ENCODE measurements at regions of chr11 and their contacts with region 1.

Region 1: DNA sequence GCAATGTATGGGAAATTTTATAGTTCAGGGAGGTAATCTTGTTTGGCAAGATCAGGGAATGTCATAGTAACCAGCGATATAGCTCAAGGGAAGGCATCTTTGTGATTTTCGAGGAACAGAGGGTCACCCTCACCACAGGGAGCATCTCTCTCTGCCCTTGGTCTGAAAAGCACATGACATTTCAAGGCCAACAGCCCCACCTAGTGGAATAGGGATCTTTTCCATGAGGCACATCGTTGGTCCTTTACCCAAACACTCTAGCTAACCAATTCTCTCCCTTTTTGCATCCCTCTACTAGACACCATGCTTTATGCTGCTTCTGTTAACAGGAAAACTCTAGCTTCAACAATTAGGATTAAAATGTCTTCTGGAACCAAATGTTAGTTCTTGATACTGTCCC is 179.0 kb downstream of the GRM5 start:
- DNase-seq: peak; percentile 46
- ATAC-seq: peak; percentile 62; the same call in 1 of the 2 replicates
- H3K4me3 ChIP-seq: no peak overlapping the region
- H3K27ac ChIP-seq: no peak overlapping the region
- H3K4me1 ChIP-seq: no peaks in the 10 kb centered on the region
- H3K27me3 ChIP-seq: no peaks in the 10 kb centered on the region
- CTCF ChIP-seq: peak; percentile 57
- POLR2A ChIP-seq: no peak
- RAD21 ChIP-seq: peak; percentile 68

Region 2: DNA sequence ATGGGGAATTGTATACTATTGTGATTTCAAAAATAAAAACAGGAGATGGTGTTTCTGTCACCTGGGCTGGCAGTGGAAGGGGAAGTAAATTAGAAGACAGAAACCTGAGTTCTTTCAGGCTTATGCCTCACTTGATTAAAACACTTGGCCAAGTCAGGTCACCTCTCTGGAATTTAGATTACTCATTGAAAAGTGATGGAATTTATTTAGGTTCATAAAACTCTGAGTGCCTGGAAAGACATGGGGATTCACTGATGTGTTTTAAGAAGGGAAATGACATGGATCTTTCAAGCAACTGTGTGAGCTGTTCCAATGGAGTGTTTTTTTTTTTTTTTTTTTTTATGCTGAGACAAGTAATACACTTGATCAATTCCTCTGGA is 1449.0 kb before region 1 on chr11:
- CTCF ChIA-PET with region 1: no interaction called
- POLR2A ChIA-PET with region 1: no interaction called
- dilution Hi-C with region 1: no loop called
- in situ Hi-C with region 1: no loop called
- intact Hi-C with region 1: no loop called
- DNase-seq: peak; percentile 84
- ATAC-seq: peak; percentile 54
- H3K4me3 ChIP-seq: no peak overlapping the region
- H3K27ac ChIP-seq: no peak overlapping the region
- H3K4me1 ChIP-seq: peaks cover 14% of the 10 kb centered on the region; the same call in 1 of the 2 replicates
- H3K27me3 ChIP-seq: no peaks in the 10 kb centered on the region
- CTCF ChIP-seq: no peak
- POLR2A ChIP-seq: no peak
- RAD21 ChIP-seq: no peak

Region 3: GRCh38 chr11:87743007-87743406 is 1143.8 kb before region 1 on chr11:
- CTCF ChIA-PET with region 1: no interaction called
- POLR2A ChIA-PET with region 1: no interaction called
- dilution Hi-C with region 1: no loop called
- in situ Hi-C with region 1: no loop called
- intact Hi-C with region 1: loop called (anchors 5 kb)
- DNase-seq: no peak
- ATAC-seq: no peak
- H3K4me3 ChIP-seq: no peak overlapping the region
- H3K27ac ChIP-seq: no peak overlapping the region
- H3K4me1 ChIP-seq: no peaks in the 10 kb centered on the region
- H3K27me3 ChIP-seq: no peaks in the 10 kb centered on the region
- CTCF ChIP-seq: no peak
- POLR2A ChIP-seq: no peak
- RAD21 ChIP-seq: no peak

Region 4: DNA sequence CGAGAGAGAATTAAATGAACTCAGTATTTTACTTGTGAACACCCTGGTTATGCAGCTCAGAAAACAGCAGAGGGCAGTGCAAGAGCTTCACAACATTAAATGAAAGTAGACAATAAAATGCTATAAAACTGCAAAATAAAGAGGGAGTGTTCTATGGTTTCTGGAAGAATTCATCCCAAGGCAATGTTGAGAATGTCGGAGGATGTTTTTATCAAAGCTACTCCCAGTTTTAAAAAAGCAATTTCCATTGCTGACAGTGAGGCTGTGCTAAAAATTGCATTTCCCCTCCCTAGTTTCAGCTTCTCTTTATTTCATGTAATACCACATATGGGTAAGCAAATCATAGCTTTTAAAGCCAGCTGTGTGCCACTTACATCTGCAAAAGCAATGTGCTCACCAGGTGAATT is 1008.4 kb before region 1 on chr11:
- CTCF ChIA-PET with region 1: no interaction called
- POLR2A ChIA-PET with region 1: no interaction called
- dilution Hi-C with region 1: no loop called
- in situ Hi-C with region 1: no loop called
- intact Hi-C with region 1: loop called (anchors 5 kb)
- DNase-seq: peak; percentile 57
- ATAC-seq: peak; percentile 72
- H3K4me3 ChIP-seq: no peak overlapping the region
- H3K27ac ChIP-seq: no peak overlapping the region
- H3K4me1 ChIP-seq: no peaks in the 10 kb centered on the region
- H3K27me3 ChIP-seq: no peaks in the 10 kb centered on the region
- CTCF ChIP-seq: peak; percentile 58
- POLR2A ChIP-seq: no peak
- RAD21 ChIP-seq: peak; percentile 57

Region 5: GRCh38 chr11:88552377-88553062 is 334.3 kb before region 1 on chr11:
- CTCF ChIA-PET with region 1: no interaction called
- POLR2A ChIA-PET with region 1: no interaction called
- dilution Hi-C with region 1: no loop called
- in situ Hi-C with region 1: loop called (anchors 25 kb)
- intact Hi-C with region 1: no loop called
- DNase-seq: peak; percentile 55
- ATAC-seq: peak; percentile 66
- H3K4me3 ChIP-seq: no peak overlapping the region
- H3K27ac ChIP-seq: no peak overlapping the region
- H3K4me1 ChIP-seq: peaks cover 4% of the 10 kb centered on the region
- H3K27me3 ChIP-seq: no peaks in the 10 kb centered on the region
- CTCF ChIP-seq: peak; percentile 61
- POLR2A ChIP-seq: no peak
- RAD21 ChIP-seq: peak; percentile 71